Esophagus squamous epithelium (tissue), 5 donors: ENCODE measurements at regions of chr2 and their contacts with region 1.

Region 1: GRCh38 chr2:101831351-101831865 is 133.9 kb downstream of the MAP4K4 start:
- DNase-seq: no peak
- H3K4me3 ChIP-seq: no peak overlapping the region
- H3K27ac ChIP-seq: peak overlapping the region in 3 of 4 donors; percentile 13 to 59 (median 29)
- H3K4me1 ChIP-seq: peaks cover 0 to 49% (median 19%) of the 10 kb centered on the region in 3 donors
- H3K27me3 ChIP-seq: no peaks in the 10 kb centered on the region
- CTCF ChIP-seq: peak; percentile 45 to 81 (median 73)
- POLR2A ChIP-seq: no peak

Region 2: DNA sequence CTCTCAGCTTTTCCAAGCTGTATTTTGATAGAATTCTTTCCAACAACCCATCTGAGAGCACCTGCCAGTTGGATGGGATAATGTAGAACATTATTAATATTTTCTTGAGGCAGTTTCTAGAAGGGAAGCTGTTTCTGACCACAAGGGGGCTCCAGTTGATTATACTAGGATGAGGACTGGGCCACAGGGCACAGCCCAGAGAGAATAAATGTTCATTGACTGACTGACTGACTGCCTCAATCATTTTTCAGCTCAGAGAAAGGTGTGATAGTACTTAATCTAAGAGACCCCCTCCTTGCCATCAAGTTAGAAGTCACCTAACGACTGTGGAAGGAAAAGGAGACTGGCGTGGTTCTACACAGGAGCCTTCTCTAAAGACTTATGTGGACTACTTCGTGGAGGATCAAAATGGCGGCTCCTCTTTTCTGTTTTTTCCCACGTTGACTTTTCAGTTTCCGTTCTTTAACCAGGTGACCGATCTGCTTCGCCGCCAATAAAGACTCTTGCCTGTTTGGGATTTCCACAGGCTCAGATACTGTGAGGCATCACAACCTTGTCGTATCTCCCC is 412.2 kb before region 1 on chr2:
- intact Hi-C with region 1: loop called (anchors 5 kb)
- DNase-seq: no peak
- H3K4me3 ChIP-seq: no peak overlapping the region
- H3K27ac ChIP-seq: no peak overlapping the region
- H3K4me1 ChIP-seq: peaks cover 0 to 19% (median 5%) of the 10 kb centered on the region in 3 donors
- H3K27me3 ChIP-seq: no peaks in the 10 kb centered on the region
- CTCF ChIP-seq: peak; percentile 71 to 85 (median 71)
- POLR2A ChIP-seq: no peak

Region 3: GRCh38 chr2:101520246-101520645 is 311.2 kb before region 1 on chr2:
- intact Hi-C with region 1: loop called (anchors 5 kb)
- DNase-seq: no peak
- H3K4me3 ChIP-seq: no peak overlapping the region
- H3K27ac ChIP-seq: no peak overlapping the region
- H3K4me1 ChIP-seq: peaks cover 0 to 35% (median 25%) of the 10 kb centered on the region in 3 donors
- H3K27me3 ChIP-seq: no peaks in the 10 kb centered on the region
- CTCF ChIP-seq: no peak
- POLR2A ChIP-seq: no peak

Region 4: DNA sequence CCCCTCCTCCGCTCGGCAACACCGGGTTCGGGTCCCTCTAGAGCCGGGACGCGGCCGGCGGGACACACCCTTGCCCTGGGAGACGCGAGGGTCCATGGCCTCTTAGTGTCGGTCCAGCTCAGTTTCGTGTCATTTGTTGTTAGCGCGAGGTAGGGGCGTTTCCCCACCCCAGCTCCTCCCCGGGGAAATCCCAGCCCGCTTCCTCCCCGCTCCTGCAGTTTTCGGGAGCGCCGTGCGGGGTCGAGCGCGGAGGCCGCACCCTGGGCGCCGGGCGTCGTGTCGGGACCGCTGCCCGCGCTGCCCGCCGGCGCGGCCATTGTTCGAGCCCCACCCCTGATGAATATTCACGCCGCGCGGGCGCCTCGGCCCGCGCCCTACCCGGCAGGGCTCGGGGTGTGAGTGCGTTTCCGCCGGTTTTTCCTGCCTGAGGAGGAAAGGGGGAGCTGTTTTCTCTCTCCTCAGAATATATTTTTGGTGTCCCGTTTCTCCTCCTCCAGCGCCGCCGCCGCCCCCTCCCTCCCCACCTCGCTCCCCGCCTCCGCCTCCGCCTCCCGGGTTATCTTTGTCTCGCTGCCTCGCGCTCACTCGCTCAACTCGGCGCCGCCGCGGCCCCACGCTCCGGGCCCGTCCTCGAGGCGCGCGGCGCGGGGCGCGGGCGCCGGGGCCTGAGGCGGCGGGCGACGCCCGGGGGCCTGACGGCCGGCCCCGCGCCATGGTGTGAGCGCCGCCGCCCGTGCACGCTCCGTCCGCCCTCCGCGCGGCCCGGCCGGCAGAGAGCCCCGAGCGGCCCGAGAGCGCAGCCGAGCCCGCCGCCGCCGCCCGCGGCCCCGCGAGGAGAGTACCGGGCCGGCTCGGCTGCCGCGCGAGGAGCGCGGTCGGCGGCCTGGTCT is 134.0 kb before region 1 on chr2 and contains the start of gene MAP4K4:
- intact Hi-C with region 1: loop called (anchors 5 kb)
- DNase-seq: peak; percentile 27
- H3K4me3 ChIP-seq: peak within 1 kb of the TSS; percentile 52 to 87 (median 72)
- H3K27ac ChIP-seq: peak within 1 kb of the TSS; percentile 84 to 94 (median 89)
- H3K4me1 ChIP-seq: peaks cover 10 to 52% (median 15%) of the 10 kb centered on the region in 3 donors
- H3K27me3 ChIP-seq: no peaks in the 10 kb centered on the region
- CTCF ChIP-seq: peak in 3 of 6 experiments; percentile 22 to 40 (median 29)
- POLR2A ChIP-seq: peak in 2 of 4 donors; percentile 51 to 66
- total RNA-seq, gene MAP4K4: 46.0 to 121 (median 53.9) TPM